Ascending aorta (tissue), 2 donors: ENCODE measurements at regions of chr5 and their contacts with region 1.

Region 1: GRCh38 chr5:95961617-95962474 is at the start of gene ELL2:
- DNase-seq: peak; percentile 100
- H3K4me3 ChIP-seq: peak within 1 kb of the TSS; percentile 92 to 98
- H3K27ac ChIP-seq: peak within 1 kb of the TSS; percentile 99
- H3K4me1 ChIP-seq: peaks cover 0 to 14% of the 10 kb centered on the region in 2 donors
- H3K27me3 ChIP-seq: no peaks in the 10 kb centered on the region
- CTCF ChIP-seq: no peak
- total RNA-seq, gene ELL2: 26.0 TPM

Region 2: GRCh38 chr5:95913663-95914062 is 48.2 kb before region 1 on chr5:
- intact Hi-C with region 1: loop called (anchors 5 kb)
- DNase-seq: no peak
- H3K4me3 ChIP-seq: no peak overlapping the region
- H3K27ac ChIP-seq: no peak overlapping the region
- H3K4me1 ChIP-seq: peaks cover 0 to 26% of the 10 kb centered on the region in 2 donors
- H3K27me3 ChIP-seq: no peaks in the 10 kb centered on the region
- CTCF ChIP-seq: no peak

Region 3: GRCh38 chr5:96125231-96125891 is 163.5 kb after region 1 on chr5:
- intact Hi-C with region 1: loop called (anchors 5 kb)
- DNase-seq: no peak
- H3K4me3 ChIP-seq: peak overlapping the region in 1 of 2 donors; percentile 38
- H3K27ac ChIP-seq: peak overlapping the region; percentile 25 to 32
- H3K4me1 ChIP-seq: peaks cover 4 to 13% of the 10 kb centered on the region in 2 donors
- H3K27me3 ChIP-seq: no peaks in the 10 kb centered on the region
- CTCF ChIP-seq: no peak

Region 4: DNA sequence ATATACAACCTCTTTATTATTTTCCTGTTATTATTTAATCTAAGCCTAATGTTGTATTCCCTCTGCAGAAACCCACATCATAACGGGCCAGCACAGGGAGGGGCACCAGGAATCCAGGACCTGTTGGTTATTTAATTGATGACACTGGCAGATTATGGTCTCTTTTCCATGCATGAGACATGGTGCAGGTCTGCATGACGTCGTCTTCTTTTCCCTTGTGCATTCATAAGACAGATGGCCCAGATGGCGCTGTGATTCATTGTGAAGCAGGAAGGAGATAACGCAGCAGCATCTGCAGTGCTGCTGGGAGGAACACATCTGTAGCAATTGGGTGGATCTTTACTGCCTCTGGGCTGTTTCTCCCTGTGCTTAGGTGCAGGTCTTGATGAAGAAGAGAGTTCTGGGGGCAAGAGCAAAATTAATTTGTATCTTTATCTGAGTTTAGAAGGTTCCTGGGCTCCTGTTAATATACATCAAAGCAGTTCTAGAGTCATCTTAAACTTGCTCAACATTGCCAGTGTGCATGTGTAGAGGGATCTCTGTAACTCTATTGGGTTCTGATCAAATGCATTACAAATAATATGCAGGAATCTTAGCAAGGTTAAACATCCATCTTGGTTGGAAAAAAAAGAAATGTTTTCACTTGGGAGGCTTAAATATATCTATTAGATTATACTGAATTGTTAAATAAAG is 295.1 kb after region 1 on chr5:
- intact Hi-C with region 1: loop called (anchors 2 kb)
- DNase-seq: no peak
- H3K4me3 ChIP-seq: no peak overlapping the region
- H3K27ac ChIP-seq: peak overlapping the region in 1 of 2 donors; percentile 80
- H3K4me1 ChIP-seq: peaks cover 0 to 27% of the 10 kb centered on the region in 2 donors
- H3K27me3 ChIP-seq: no peaks in the 10 kb centered on the region
- CTCF ChIP-seq: no peak

Region 5: GRCh38 chr5:96702503-96703383 is 740.9 kb after region 1 on chr5:
- intact Hi-C with region 1: loop called (anchors 10 kb)
- DNase-seq: peak; percentile 90 to 99
- H3K4me3 ChIP-seq: peak overlapping the region; percentile 63 to 75
- H3K27ac ChIP-seq: peak overlapping the region; percentile 90 to 94
- H3K4me1 ChIP-seq: peaks cover 0 to 21% of the 10 kb centered on the region in 2 donors
- H3K27me3 ChIP-seq: no peaks in the 10 kb centered on the region
- CTCF ChIP-seq: no peak